ENCODE measurements at regions of chr9 and their contacts with region 1.

Region 1: DNA sequence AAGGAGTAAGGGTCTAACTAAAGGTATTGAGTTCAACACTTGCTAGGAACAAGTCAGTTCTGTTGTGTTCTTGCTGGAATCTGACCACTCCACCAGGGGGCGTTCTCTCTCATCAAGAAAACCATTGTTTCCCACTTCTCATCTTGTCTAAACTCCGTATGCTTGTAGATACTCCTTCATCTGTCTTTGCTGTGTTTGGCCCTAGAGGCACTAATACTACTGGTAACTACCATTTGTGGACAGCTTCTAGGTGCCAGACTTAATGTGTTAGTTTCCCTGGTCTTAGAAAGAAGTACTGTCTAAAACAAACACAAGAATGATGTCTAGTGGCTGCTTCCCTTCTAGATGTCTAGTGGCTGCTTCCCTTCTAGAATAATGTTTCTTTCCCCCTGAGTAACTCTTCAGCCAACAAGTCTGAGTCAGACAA is 18.7 kb upstream of the PTPDC1 start:
- DNase-seq: peak; percentile 34 to 84
- ATAC-seq: peak; percentile 68 to 87
- H3K4me3 ChIP-seq: no peak overlapping the region
- H3K27ac ChIP-seq: 0 out of 6 replicates have a peak overlapping the region, but pooled peaks of 1 of the 2 experiments have one; percentile 23
- H3K4me1 ChIP-seq: no peaks in the 10 kb centered on the region
- CTCF ChIP-seq: peak; percentile 85
- EP300 ChIP-seq: no peak
- POLR2A ChIP-seq: no peak
- RAD21 ChIP-seq: peak; percentile 81 to 82

Region 2: GRCh38 chr9:94042516-94043360 is 22.8 kb before region 1 on chr9:
- CTCF ChIA-PET with region 1: interaction called, 11 read pairs
- POLR2A ChIA-PET with region 1: no interaction called
- DNase-seq: no peak
- ATAC-seq: no peak
- H3K4me3 ChIP-seq: no peak overlapping the region
- H3K27ac ChIP-seq: no peak overlapping the region
- H3K4me1 ChIP-seq: no peaks in the 10 kb centered on the region
- CTCF ChIP-seq: no peak
- EP300 ChIP-seq: no peak
- POLR2A ChIP-seq: no peak
- RAD21 ChIP-seq: no peak

Region 3: DNA sequence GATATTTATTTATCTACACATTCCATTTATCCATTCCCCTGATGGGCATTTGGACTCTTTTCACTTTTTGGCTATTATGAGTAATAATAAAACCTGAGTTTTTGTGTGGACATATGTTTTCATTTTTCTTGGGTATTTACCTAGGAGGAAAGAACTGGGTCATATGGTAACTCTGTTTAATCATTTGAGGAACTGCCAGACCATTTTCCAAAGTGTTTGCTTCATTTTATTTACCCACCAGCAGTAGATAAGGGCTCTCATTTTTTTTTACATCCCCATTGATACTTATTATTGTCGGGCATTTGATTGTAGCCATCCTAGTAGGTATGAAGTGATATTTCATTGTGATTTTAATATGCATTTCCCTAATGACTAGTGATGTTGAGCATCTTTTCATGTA is 11.0 kb after region 1 on chr9:
- CTCF ChIA-PET with region 1: interaction called, 21 read pairs
- POLR2A ChIA-PET with region 1: no interaction called
- DNase-seq: no peak
- ATAC-seq: no peak
- H3K4me3 ChIP-seq: no peak overlapping the region
- H3K27ac ChIP-seq: no peak overlapping the region
- H3K4me1 ChIP-seq: no peaks in the 10 kb centered on the region
- CTCF ChIP-seq: no peak
- EP300 ChIP-seq: no peak
- POLR2A ChIP-seq: no peak
- RAD21 ChIP-seq: no peak